CD8-positive, alpha-beta T cell (primary cell): ENCODE measurements at regions of chr1 and their contacts with region 1.

Region 1: DNA sequence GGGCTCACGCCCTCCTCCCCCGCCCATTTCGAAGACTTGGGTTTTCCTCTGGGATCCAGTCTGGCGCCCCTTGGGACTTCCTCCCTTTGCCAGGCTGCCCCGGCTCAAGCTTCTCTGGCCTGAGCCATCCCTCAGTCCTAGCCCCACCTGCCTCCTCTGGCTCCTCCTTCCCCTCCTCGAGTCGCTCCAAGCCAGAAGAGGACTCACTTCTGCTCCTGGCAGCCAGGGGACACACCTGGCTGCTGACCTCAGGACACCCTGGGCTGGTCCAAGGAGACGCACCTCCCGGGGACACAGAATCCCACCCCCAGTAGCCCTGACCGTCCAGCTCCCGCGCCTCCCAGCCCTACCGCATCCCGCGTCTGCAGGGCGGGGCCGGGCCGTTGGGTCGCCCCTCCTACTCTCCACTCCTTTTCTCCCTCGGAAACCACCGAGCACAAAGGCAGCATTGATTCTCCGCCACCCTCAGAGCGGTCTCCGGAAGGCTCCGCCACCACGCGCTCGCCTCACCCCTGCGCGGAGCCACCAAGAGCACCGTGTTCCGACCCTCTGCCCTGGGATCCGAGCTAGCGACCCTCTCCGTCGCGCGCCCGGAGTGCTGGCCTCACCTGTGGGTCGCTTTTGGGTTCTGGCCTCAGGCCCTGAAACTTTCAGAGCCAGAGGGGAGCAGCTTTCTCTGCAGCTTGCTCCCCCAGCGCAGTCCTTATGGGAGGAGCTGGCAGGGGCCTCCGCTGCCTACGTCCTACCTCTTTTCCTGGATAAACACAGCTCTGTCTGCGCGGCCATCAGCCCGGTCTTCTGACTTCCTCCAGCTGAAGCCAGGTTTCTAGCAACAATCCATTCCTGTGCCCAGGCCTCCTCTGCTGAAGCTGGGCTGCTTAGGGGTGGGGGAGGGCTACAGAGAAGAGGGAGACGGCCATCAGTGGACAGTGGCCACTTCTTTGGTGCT is at the start of gene C2CD4D:
- DNase-seq: peak; percentile 43 to 89 (median 67)
- ATAC-seq: peak; percentile 72
- H3K4me3 ChIP-seq: peak within 1 kb of the TSS; percentile 52
- H3K4me3 Mint-ChIP-seq: peak within 1 kb of the TSS; percentile 85
- H3K27ac ChIP-seq: peak within 1 kb of the TSS in 1 of 2 experiments; percentile 66
- H3K27ac Mint-ChIP-seq: peak within 1 kb of the TSS; percentile 88
- H3K4me1 ChIP-seq: peaks cover 37% of the 10 kb centered on the region
- H3K4me1 Mint-ChIP-seq: peaks cover 47% of the 10 kb centered on the region
- H3K27me3 ChIP-seq: peaks cover 0 to 3% of the 10 kb centered on the region in 2 experiments
- H3K27me3 Mint-ChIP-seq: no peaks in the 10 kb centered on the region
- CTCF ChIP-seq: no peak
- total RNA-seq, gene C2CD4D: 0.44 to 0.65 TPM

Region 2: DNA sequence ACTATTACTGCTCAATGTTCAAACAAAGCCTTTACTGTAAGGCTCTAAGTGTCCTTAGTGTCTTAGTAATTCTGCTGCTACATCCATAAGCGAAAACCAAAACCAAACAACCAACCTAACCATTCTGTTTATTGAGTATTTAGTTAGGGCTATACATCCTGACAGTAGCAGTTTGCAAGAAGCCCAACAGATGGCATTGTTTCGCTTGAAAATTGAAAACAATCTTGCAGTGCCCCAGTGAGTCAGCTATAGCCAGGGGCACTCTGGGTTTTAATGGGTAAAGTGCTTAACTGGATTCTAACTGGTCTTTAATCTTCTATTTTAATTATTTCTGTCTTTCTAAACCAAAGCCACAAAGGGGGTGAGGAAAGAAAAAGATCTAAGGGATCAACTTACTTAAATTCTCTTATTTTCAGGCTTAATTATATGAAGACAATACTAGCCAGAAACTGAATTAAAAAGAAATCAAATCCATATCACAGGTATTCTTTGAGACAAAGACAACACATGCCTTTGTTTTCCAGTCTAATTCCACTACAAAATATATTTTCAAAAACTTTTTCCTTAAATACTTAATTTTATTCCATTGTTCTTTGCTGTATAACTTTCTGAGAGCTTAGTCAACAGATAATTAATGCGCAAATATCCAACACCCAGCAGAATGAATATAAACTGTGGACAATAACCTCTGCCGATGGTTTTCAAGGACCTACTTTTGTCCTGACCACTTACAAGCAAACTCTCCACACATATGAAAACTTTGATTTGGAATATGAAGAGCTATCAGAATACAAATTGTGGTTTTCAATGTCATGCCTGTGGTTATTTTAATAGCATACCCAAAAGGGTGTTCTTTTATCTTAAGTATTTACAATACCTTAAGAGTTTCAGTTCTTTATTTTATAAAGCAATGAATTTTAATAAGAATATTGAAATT is 395.6 kb before region 1 on chr1:
- CTCF ChIA-PET with region 1: interaction called, 4 read pairs
- POLR2A ChIA-PET with region 1: no interaction called
- intact Hi-C with region 1: loop called (anchors 1 kb)
- DNase-seq: peak; percentile 40 to 86 (median 66)
- ATAC-seq: peak; percentile 100
- H3K4me3 ChIP-seq: no peak overlapping the region
- H3K4me3 Mint-ChIP-seq: no peak overlapping the region
- H3K27ac ChIP-seq: no peak overlapping the region
- H3K27ac Mint-ChIP-seq: no peak overlapping the region
- H3K4me1 ChIP-seq: peaks cover 6% of the 10 kb centered on the region
- H3K4me1 Mint-ChIP-seq: peaks cover 63% of the 10 kb centered on the region
- H3K27me3 ChIP-seq: no peaks in the 10 kb centered on the region
- H3K27me3 Mint-ChIP-seq: no peaks in the 10 kb centered on the region
- CTCF ChIP-seq: peak; percentile 83

Region 3: DNA sequence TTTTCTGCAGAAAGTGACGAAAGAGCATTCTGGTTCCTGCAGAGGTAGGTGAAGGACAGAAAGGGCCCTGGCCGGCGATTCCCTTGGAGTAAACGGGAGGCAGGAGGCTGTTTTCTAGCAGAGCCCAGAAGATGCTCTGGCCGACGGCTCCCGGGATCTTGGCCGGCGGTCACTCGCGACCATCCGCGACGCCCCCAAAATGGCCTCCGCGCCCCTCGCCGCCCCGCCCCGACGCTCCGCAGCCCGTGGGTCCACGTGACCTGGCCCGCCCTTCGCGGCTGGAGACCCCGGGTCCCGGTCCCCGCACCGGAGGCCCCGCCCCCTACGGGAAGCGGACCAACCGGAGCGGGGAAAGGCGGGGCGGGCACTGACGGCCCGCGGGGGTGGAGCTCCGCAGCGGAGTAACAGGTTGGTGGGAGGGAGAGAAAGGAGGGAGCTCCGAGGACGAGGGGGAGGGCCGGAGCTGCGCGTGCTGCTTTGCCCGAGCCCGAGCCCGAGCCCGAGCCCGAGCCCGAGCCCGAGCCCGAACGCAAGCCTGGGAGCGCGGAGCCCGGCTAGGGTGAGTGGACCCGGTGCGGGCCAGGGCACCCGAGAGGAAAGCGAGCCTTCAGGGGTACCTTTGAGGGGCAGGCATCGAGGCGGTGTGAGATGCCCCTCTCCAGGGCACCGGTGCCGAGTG is 328.6 kb before region 1 on chr1 and contains the start of gene CGN:
- CTCF ChIA-PET with region 1: no interaction called
- POLR2A ChIA-PET with region 1: no interaction called
- intact Hi-C with region 1: loop called in 1 of 2 experiments (anchors 1 kb)
- DNase-seq: peak; percentile 62 to 94 (median 86)
- ATAC-seq: peak; percentile 97
- H3K4me3 ChIP-seq: peak within 1 kb of the TSS; percentile 65 to 79
- H3K4me3 Mint-ChIP-seq: peak within 1 kb of the TSS; percentile 94
- H3K27ac ChIP-seq: peak within 1 kb of the TSS; percentile 42 to 48
- H3K27ac Mint-ChIP-seq: peak within 1 kb of the TSS; percentile 80
- H3K4me1 ChIP-seq: peaks cover 21% of the 10 kb centered on the region
- H3K4me1 Mint-ChIP-seq: peaks cover 28% of the 10 kb centered on the region
- H3K27me3 ChIP-seq: no peaks in the 10 kb centered on the region
- H3K27me3 Mint-ChIP-seq: no peaks in the 10 kb centered on the region
- CTCF ChIP-seq: no peak
- total RNA-seq, gene CGN: 0.28 to 0.49 TPM

Region 4: DNA sequence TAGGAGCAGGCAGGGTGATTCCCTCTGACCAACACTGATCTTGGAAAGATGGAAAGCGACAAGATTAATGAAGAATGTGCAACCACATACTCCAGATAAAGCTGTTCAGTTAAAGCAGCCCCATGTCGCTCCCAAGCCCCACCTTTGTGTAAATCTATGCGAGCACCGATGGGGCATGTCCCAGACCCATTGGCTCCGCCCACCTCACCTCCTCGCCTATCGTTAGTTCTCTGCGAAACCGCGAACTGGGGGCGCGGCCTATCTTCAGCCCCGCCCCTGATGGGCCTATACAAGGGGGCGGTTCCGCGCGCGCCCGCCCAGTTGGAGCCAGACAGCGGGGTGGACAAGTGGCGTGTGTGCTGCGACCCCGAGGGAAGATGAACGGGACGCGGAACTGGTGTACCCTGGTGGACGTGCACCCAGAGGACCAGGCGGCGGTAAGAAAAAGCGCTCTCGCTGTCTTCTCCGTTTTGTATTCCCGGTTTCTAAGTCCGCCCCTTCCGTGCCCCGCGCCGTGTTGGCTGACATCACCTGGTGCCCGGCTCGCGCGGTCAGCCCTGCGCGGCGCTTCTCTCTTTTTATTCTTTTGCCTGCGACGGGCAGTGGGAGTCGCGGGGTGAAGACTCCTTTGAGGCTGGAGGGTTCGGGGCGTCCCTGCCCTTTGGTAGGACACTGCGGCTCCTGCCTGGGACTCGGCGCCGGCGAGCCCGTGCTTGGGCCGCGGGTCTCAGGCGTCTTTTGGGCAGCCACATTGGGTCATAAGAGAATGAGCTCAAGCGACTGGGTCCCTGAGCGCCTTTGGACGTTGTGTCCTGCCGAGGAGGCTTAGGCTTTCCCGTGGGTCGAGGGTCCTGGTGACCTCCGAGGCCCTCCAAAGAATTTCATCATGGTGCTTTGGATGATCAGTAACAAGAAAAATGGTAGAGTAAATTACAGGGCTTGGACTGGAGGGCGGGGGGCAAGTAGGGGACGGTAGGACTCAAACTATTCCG is 299.4 kb before region 1 on chr1 and contains the start of gene TUFT1:
- CTCF ChIA-PET with region 1: interaction called, 6 read pairs
- POLR2A ChIA-PET with region 1: no interaction called
- intact Hi-C with region 1: loop called in 1 of 2 experiments (anchors 5 kb)
- DNase-seq: peak; percentile 86 to 97 (median 94)
- ATAC-seq: peak; percentile 99
- H3K4me3 ChIP-seq: peak within 1 kb of the TSS; percentile 74 to 78
- H3K4me3 Mint-ChIP-seq: peak within 1 kb of the TSS; percentile 95
- H3K27ac ChIP-seq: peak within 1 kb of the TSS in 1 of 2 experiments; percentile 29
- H3K27ac Mint-ChIP-seq: peak within 1 kb of the TSS; percentile 82
- H3K4me1 ChIP-seq: peaks cover 14% of the 10 kb centered on the region
- H3K4me1 Mint-ChIP-seq: peaks cover 21% of the 10 kb centered on the region
- H3K27me3 ChIP-seq: peaks cover 4 to 16% of the 10 kb centered on the region in 2 experiments
- H3K27me3 Mint-ChIP-seq: no peaks in the 10 kb centered on the region
- CTCF ChIP-seq: no peak
- total RNA-seq, gene TUFT1: 8.5 TPM

Region 5: DNA sequence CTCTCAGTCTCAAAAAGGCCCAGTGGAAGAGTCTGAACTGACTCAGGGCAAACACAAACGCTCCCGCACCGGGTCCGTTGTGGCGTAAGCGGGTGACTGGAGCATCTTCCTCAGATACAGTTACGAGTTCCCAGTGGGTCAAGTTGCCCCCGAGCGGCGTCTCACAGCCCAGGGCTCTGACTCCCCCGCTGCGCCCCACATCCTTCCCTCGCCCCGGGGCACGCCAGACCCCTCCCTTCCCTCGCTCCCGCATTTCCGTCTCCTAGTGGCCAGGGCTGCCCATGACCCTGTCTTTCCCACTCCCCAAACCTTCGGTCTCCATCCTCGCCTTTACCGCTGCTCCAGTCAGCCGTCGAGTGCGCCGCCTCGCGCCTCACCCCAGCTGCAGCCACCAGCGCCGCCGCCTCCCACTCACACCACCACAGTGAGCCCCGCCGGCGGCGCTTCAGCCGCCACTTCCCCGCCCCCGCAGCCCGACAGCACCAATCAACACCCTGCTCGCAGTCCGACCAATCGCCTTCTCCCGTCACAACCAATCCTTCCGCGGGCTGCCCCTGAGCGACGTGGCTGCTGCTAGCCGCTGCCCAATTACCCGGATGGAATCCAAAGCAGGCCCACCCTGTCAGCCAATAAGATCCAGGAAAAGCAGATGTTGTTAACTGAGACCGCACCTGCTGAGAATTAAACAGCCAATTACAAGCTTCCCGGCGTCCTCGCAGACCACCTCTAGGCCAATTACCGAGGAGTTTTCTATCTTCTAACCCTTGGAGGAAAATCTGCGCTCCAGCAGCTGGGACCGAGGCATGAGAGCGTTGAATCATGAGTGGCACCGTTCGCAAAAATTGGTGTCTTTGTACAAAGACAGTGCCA is 49.4 kb before region 1 on chr1 and contains the start of gene TDRKH:
- CTCF ChIA-PET with region 1: interaction called, 7 read pairs
- POLR2A ChIA-PET with region 1: interaction called, 5 read pairs
- intact Hi-C with region 1: loop called (anchors 2 kb)
- DNase-seq: peak; percentile 95 to 99 (median 97)
- ATAC-seq: peak; percentile 94
- H3K4me3 ChIP-seq: peak within 1 kb of the TSS; percentile 68 to 82
- H3K4me3 Mint-ChIP-seq: peak within 1 kb of the TSS; percentile 98
- H3K27ac ChIP-seq: peak within 1 kb of the TSS; percentile 29 to 37
- H3K27ac Mint-ChIP-seq: peak within 1 kb of the TSS; percentile 89
- H3K4me1 ChIP-seq: peaks cover 12% of the 10 kb centered on the region
- H3K4me1 Mint-ChIP-seq: peaks cover 30% of the 10 kb centered on the region
- H3K27me3 ChIP-seq: no peaks in the 10 kb centered on the region
- H3K27me3 Mint-ChIP-seq: no peaks in the 10 kb centered on the region
- CTCF ChIP-seq: no peak
- total RNA-seq, gene TDRKH: 3.6 to 3.9 TPM